ENCODE measurements at regions of chr21 and their contacts with region 1.

Region 1: DNA sequence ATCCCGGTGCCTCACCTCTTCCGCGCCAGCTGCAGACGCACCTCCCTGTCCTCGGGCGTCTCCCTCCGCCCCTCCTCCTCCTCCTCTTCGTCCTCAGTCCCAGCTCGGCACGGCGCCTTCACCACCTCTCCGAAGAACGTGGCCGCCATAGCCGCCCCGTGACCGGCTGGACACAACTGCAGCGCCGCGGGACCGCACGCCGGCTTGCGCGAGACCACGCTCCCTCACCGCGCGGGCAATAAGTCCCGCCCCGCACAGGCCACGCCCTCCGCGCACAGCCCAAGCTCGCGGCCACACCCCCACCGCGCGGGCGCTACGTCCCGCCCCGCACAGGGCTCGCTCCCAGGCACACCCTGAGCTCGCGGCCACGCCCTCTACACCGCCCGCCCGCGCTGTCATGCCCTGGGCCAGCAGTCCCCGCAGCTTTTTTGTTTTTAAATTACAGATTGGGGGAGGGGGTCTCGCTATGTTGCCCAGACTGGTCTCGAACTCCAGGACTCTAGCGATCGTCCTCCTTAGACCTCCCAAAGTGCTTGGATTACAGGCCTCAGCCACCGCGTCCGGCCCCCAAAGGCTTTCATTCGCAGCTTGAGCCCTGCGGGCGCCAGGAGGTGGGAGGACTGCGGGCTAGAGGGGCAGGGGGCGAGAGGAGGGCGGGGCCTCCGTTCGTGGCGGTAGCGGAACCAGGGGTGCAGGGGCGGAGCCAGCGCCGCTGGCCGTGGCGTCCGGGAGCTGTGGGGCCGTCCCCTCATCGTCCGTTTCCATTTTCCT is at the start of gene PSMG1:
- DNase-seq: peak; percentile 97
- ATAC-seq: peak; percentile 91
- H3K4me3 Mint-ChIP-seq: peak within 1 kb of the TSS; percentile 98
- H3K27ac Mint-ChIP-seq: peak within 1 kb of the TSS; percentile 94
- H3K4me1 Mint-ChIP-seq: peaks cover 20% of the 10 kb centered on the region
- H3K27me3 Mint-ChIP-seq: no peaks in the 10 kb centered on the region
- CTCF ChIP-seq: no peak
- total RNA-seq, gene PSMG1: 23.7 and 28.4 TPM in 2 replicates

Region 2: DNA sequence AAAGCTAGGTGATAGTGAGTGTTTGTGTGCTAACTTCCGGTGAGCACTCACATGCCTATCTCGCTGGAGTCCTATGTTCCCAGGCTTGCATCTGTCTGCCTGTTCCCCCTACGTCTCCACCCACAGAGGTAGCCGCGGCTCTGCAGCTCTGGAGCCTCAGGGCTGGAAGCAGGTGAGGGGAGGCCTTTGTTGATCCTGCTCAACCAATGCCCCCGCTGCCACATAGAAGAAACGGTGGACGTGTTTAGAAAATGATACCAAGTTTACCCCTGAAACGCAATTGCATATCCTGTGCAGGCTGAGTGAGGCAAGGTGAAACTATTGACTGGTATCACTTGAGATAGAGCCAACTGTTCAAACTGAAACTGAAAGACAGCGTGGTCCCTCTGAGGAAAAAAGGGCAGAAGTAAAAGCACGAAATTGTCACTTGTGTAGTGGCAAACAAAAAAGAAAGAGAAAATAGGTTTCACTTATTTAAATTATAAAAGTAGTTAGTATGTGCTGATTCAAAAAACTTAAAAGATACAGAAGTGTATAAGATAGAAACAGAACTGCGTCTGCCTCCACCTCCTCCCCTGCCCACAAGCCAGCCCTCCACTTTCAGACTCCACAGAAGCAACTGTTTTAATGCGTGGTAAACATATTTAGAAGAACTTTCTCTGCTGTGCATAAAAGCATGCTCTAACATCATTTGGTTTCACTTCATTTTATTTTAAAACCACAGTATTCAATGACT is 416.3 kb before region 1 on chr21:
- CTCF ChIA-PET with region 1: no interaction called
- POLR2A ChIA-PET with region 1: no interaction called
- intact Hi-C with region 1: loop called (anchors 1 kb)
- DNase-seq: peak; percentile 23
- ATAC-seq: peak; percentile 96
- H3K4me3 Mint-ChIP-seq: peak overlapping the region; percentile 83
- H3K27ac Mint-ChIP-seq: peak overlapping the region; percentile 83
- H3K4me1 Mint-ChIP-seq: peaks cover 29% of the 10 kb centered on the region
- H3K27me3 Mint-ChIP-seq: peaks cover 29% of the 10 kb centered on the region
- CTCF ChIP-seq: no peak

Region 3: DNA sequence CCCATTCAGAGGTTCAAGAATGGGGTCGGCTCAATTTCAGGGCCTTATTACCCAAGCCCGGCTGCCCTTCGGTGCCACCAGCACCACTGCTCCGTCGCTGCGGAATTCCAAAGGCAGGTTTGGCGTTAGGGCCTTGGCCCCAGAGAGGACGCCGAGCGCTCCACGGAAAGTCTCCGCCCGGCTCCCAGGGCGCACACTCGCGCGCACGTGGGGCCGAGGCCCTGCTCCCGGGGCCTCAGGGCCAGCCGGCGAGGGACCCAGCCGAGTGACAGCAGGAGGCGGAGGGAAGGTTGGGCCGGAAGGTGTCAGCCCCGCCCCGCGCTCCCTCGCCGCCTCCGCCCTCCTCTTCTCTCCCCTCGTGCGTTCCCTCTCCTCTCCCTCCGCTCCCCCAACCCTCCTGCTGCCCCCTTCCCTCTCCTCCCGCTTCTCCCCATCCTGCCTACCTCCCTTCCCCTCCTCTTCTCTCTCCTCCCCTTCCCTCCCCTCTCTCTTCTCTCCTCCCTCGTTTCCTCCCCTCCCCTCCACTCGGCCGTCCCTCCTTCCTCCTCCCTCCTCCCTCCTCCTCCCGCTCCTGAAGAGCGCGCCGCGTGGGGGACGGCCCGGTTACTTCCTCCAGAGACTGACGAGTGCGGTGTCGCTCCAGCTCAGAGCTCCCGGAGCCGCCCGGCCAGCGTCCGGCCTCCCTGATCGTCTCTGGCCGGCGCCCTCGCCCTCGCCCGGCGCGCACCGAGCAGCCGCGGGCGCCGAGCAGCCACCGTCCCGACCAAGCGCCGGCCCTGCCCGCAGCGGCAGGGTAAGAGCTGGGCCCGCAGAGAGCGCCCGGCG is 377.9 kb before region 1 on chr21 and contains the start of gene ETS2:
- CTCF ChIA-PET with region 1: no interaction called
- POLR2A ChIA-PET with region 1: interaction called, 3 read pairs
- intact Hi-C with region 1: loop called (anchors 1 kb)
- DNase-seq: peak; percentile 55
- ATAC-seq: peak; percentile 83
- H3K4me3 Mint-ChIP-seq: peak within 1 kb of the TSS; percentile 83
- H3K27ac Mint-ChIP-seq: peak within 1 kb of the TSS; percentile 30
- H3K4me1 Mint-ChIP-seq: peaks cover 16% of the 10 kb centered on the region
- H3K27me3 Mint-ChIP-seq: peaks cover 9% of the 10 kb centered on the region
- CTCF ChIP-seq: no peak
- total RNA-seq, gene ETS2: 4.4 and 4.5 TPM in 2 replicates

Region 4: DNA sequence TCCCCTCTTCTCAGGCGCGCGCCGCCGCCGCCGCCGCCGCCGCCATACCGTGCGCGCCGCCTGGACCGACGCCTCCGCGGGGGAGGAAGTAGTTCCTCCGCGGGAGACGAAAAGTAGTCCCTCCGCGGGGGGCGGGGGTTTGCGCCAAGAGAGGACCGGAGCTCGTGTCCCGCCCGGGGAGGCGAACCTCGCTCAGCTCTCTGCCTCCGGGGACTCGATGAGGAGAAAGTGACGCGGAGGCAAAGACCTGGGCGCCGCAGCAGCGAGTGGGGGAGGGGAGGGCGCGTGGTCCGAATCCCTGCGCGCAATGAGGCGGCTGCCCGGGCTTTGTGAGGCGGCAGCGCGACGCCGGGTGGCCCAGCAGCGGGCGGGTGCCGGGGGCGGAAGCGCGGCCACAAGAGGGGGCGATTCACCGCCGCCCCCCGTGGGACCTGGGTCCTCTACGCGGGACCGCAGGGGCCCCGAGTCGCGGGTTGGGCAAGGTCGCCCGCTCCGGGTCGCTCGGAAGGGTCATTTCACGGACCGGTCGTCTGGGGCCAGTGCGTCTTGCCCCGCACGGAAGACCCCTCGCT is 130.2 kb after region 1 on chr21 and contains the start of gene BRWD1:
- CTCF ChIA-PET with region 1: no interaction called
- POLR2A ChIA-PET with region 1: interaction called, 29 read pairs
- intact Hi-C with region 1: loop called (anchors 1 kb)
- DNase-seq: peak; percentile 86
- ATAC-seq: peak; percentile 49
- H3K4me3 Mint-ChIP-seq: peak within 1 kb of the TSS; percentile 94
- H3K27ac Mint-ChIP-seq: peak within 1 kb of the TSS; percentile 92
- H3K4me1 Mint-ChIP-seq: peaks cover 47% of the 10 kb centered on the region
- H3K27me3 Mint-ChIP-seq: no peaks in the 10 kb centered on the region
- CTCF ChIP-seq: no peak
- total RNA-seq, gene BRWD1: 36.9 and 40.3 TPM in 2 replicates

Region 5: GRCh38 chr21:39349211-39350093 is 166.0 kb after region 1 on chr21:
- CTCF ChIA-PET with region 1: no interaction called
- POLR2A ChIA-PET with region 1: interaction called, 16 read pairs
- intact Hi-C with region 1: loop called (anchors 1 kb)
- DNase-seq: peak; percentile 95
- ATAC-seq: peak; percentile 84
- H3K4me3 Mint-ChIP-seq: peak overlapping the region; percentile 97
- H3K27ac Mint-ChIP-seq: peak overlapping the region; percentile 97
- H3K4me1 Mint-ChIP-seq: peaks cover 41% of the 10 kb centered on the region
- H3K27me3 Mint-ChIP-seq: no peaks in the 10 kb centered on the region
- CTCF ChIP-seq: no peak

Region 6: DNA sequence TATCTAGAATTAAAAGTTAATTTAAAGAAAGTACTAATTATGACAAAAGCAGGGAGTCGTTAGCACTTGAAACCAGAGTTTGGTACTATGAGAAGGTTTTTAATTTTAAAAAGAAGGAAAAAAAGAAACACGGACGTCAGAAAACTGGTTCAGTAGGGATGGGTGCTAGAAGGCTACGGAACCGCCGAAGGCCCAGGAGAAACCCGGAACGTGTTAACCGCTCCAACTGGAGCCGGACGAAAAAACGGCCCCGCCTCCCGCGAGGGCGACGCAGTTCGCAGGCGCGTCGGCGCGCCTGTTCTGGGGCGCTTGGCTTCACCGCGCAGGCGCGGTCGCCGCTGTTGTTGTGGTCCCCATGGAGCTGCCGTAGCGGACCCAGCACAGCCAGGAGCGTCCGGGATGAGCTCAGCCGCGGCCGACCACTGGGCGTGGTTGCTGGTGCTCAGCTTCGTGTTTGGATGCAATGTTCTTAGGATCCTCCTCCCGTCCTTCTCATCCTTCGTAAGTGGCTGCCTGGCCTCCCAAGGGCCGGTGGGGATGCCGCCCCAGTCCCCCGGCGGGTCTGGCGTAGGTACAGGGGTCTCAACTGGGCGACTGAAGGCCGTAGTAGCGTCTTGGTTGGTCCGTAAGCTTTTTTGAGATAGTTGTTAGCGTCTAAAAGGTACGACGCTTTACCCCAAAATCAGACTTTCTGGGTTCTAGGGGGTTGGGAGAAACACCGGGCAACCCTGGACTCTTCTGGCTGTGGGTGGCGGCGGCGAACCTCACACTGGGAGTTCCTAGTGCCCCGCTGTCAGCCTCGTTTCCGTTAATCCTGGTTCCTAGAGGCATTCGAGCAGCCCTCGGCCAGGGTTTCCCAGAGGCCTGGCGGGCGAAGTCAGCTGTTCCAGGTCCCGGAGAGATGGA is 196.8 kb after region 1 on chr21:
- CTCF ChIA-PET with region 1: no interaction called
- POLR2A ChIA-PET with region 1: interaction called, 11 read pairs
- intact Hi-C with region 1: loop called (anchors 2 kb)
- DNase-seq: peak; percentile 82
- ATAC-seq: peak; percentile 99
- H3K4me3 Mint-ChIP-seq: peak overlapping the region; percentile 93
- H3K27ac Mint-ChIP-seq: peak overlapping the region; percentile 78
- H3K4me1 Mint-ChIP-seq: peaks cover 12% of the 10 kb centered on the region
- H3K27me3 Mint-ChIP-seq: no peaks in the 10 kb centered on the region
- CTCF ChIP-seq: no peak

Region 7: GRCh38 chr21:39445321-39446269 is 262.2 kb after region 1 on chr21 and contains the start of gene LCA5L:
- CTCF ChIA-PET with region 1: interaction called, 3 read pairs
- POLR2A ChIA-PET with region 1: no interaction called
- intact Hi-C with region 1: loop called (anchors 1 kb)
- DNase-seq: peak; percentile 95
- ATAC-seq: peak; percentile 91
- H3K4me3 Mint-ChIP-seq: peak within 1 kb of the TSS; percentile 94
- H3K27ac Mint-ChIP-seq: peak within 1 kb of the TSS; percentile 95
- H3K4me1 Mint-ChIP-seq: peaks cover 12% of the 10 kb centered on the region
- H3K27me3 Mint-ChIP-seq: peaks cover 12% of the 10 kb centered on the region
- CTCF ChIP-seq: no peak
- total RNA-seq, gene LCA5L: 0.33 and 0.86 TPM in 2 replicates

Region 8: DNA sequence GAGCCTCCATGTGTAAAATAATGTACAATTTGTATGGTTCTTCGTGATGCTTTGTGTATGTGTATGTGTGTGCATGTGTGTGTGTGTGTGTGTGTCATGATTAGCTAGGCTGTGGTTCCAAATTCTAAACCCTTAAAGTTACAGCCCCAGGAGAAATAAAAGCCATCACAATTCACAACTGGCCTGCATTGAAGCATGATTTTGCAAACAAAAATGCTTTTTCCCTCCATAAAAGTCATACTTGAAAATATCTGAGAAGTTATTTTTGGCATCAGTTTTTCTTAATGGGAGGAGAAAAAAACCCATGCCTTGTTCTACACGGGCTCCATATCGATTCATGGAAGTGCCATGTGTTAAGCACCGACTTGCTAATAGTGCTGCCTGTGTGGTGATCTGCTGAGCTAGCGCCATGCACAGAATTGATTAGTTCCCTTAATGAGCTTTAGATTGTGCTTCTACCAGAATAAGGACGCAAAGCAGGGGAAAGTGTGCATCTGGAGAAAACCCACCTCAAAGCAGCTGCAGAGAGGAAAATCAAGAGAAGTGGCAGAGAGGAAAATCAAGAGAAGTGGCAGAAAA is 1456.3 kb after region 1 on chr21:
- CTCF ChIA-PET with region 1: no interaction called
- POLR2A ChIA-PET with region 1: no interaction called
- intact Hi-C with region 1: no loop called
- DNase-seq: no peak
- ATAC-seq: no peak
- H3K4me3 Mint-ChIP-seq: no peak overlapping the region
- H3K27ac Mint-ChIP-seq: no peak overlapping the region
- H3K4me1 Mint-ChIP-seq: no peaks in the 10 kb centered on the region
- H3K27me3 Mint-ChIP-seq: no peaks in the 10 kb centered on the region
- CTCF ChIP-seq: no peak